HepG2 (cell line): ENCODE measurements at regions of chr14 and their contacts with region 1.

Region 1: GRCh38 chr14:22766456-22767322 is at the start of gene OXA1L:
- DNase-seq: peak; percentile 100
- ATAC-seq: peak; percentile 90
- H3K4me3 ChIP-seq: peak within 1 kb of the TSS; percentile 72 to 96 (median 83)
- H3K27ac ChIP-seq: peak within 1 kb of the TSS; percentile 74
- H3K4me1 ChIP-seq: peaks cover 22% of the 10 kb centered on the region
- H3K27me3 ChIP-seq: no peaks in the 10 kb centered on the region; a peak in 1 of 5 replicates
- CTCF ChIP-seq: peak; percentile 37
- EP300 ChIP-seq: peak in 1 of 2 experiments; percentile 52; a peak in 1 of 4 replicates
- POLR2A ChIP-seq: peak; percentile 98
- RAD21 ChIP-seq: peak; percentile 13
- total RNA-seq, gene OXA1L: 216 and 230 TPM in 2 replicates

Region 2: DNA sequence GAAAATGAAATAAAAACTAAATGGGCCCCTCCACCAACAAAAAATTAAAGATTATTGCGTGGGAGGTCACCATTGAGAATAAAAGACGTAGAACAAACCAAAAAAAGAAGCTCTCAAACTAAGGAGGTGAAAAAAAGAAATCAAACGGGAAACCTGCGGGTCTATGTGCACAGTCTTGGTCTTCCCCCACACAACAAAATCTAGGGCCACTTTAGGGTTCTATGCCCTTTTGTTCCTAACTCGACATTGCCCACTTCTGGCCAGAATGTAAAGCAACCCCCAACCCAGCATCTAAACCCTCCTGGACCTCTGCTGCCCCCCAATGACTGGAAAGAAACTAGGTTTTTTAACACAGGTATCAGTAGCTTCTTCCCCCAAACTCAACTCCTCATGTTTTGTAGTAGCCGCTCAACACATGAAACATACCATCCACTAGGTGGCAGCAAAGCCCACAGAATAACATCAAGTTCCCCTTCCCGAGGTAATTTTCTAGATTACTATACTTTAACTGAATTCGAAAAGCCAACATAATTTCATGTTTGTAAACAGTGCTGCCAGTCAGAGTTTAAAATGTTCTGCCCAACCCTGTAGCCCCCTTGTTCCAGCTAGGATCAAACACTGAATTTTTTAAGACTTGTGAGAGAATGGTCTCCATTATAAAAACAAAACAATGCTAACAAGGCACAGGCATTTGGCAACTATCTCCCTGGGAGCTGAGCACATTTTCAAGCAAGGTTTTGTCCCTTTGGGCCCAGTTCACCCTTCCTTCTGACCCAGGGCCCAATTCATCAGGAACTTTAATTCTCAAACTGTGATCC is 196.3 kb before region 1 on chr14:
- CTCF ChIA-PET with region 1: no interaction called
- POLR2A ChIA-PET with region 1: interaction called, 11 read pairs
- in situ Hi-C with region 1: no loop called
- intact Hi-C with region 1: loop called (anchors 1 kb)
- DNase-seq: peak; percentile 98
- ATAC-seq: peak; percentile 86
- H3K4me3 ChIP-seq: no peak overlapping the region
- H3K27ac ChIP-seq: peak overlapping the region; percentile 12
- H3K4me1 ChIP-seq: peaks cover 29% of the 10 kb centered on the region
- H3K27me3 ChIP-seq: no peaks in the 10 kb centered on the region
- CTCF ChIP-seq: peak; percentile 97
- EP300 ChIP-seq: no peak; a peak in 1 of 4 replicates
- POLR2A ChIP-seq: no peak
- RAD21 ChIP-seq: peak; percentile 96

Region 3: GRCh38 chr14:22653012-22653621 is 113.6 kb before region 1 on chr14:
- CTCF ChIA-PET with region 1: no interaction called
- POLR2A ChIA-PET with region 1: interaction called, 10 read pairs
- in situ Hi-C with region 1: no loop called
- intact Hi-C with region 1: loop called (anchors 5 kb)
- DNase-seq: peak; percentile 86
- ATAC-seq: peak; percentile 98
- H3K4me3 ChIP-seq: no peak overlapping the region
- H3K27ac ChIP-seq: no peak overlapping the region
- H3K4me1 ChIP-seq: 0 out of 2 replicates have a peak, but pooled peaks cover 5% of the 10 kb centered on the region
- H3K27me3 ChIP-seq: peaks cover 3 to 36% of the 10 kb centered on the region in 2 experiments; a peak in 4 of 5 replicates
- CTCF ChIP-seq: peak; percentile 99
- EP300 ChIP-seq: no peak; a peak in 1 of 4 replicates
- POLR2A ChIP-seq: no peak
- RAD21 ChIP-seq: peak; percentile 94

Region 4: GRCh38 chr14:22781586-22781991 is 14.9 kb after region 1 on chr14:
- CTCF ChIA-PET with region 1: no interaction called
- POLR2A ChIA-PET with region 1: interaction called, 14 read pairs
- in situ Hi-C with region 1: no loop called
- intact Hi-C with region 1: no loop called
- DNase-seq: no peak
- ATAC-seq: no peak
- H3K4me3 ChIP-seq: no peak overlapping the region
- H3K27ac ChIP-seq: no peak overlapping the region
- H3K4me1 ChIP-seq: peaks cover 7% of the 10 kb centered on the region; the same call in 1 of the 2 replicates
- H3K27me3 ChIP-seq: no peaks in the 10 kb centered on the region
- CTCF ChIP-seq: no peak
- EP300 ChIP-seq: no peak
- POLR2A ChIP-seq: no peak
- RAD21 ChIP-seq: no peak

Region 5: GRCh38 chr14:22822571-22823098 is 55.9 kb after region 1 on chr14:
- CTCF ChIA-PET with region 1: no interaction called
- POLR2A ChIA-PET with region 1: interaction called, 29 read pairs
- in situ Hi-C with region 1: no loop called
- intact Hi-C with region 1: no loop called
- DNase-seq: peak; percentile 78
- ATAC-seq: peak; percentile 70
- H3K4me3 ChIP-seq: peak overlapping the region; percentile 12 to 53 (median 27); a peak in 5 of 6 replicates
- H3K27ac ChIP-seq: no peak overlapping the region
- H3K4me1 ChIP-seq: peaks cover 67% of the 10 kb centered on the region
- H3K27me3 ChIP-seq: 0 out of 5 replicates have a peak, but pooled peaks cover 0 to 3% of the 10 kb centered on the region in 2 experiments
- CTCF ChIP-seq: peak; percentile 93
- EP300 ChIP-seq: 0 out of 4 replicates have a peak, but pooled peaks of 1 of the 2 experiments have one; percentile 19
- POLR2A ChIP-seq: no peak
- RAD21 ChIP-seq: peak; percentile 97

Region 6: GRCh38 chr14:22852940-22853767 is 86.5 kb after region 1 on chr14:
- CTCF ChIA-PET with region 1: no interaction called
- POLR2A ChIA-PET with region 1: interaction called, 16 read pairs
- in situ Hi-C with region 1: loop called (anchors 10 kb)
- intact Hi-C with region 1: no loop called
- DNase-seq: peak; percentile 86
- ATAC-seq: peak; percentile 88
- H3K4me3 ChIP-seq: peak overlapping the region; percentile 43 to 80 (median 57)
- H3K27ac ChIP-seq: no peak overlapping the region
- H3K4me1 ChIP-seq: peaks cover 42% of the 10 kb centered on the region
- H3K27me3 ChIP-seq: peaks cover 7 to 30% of the 10 kb centered on the region in 2 experiments; a peak in 4 of 5 replicates
- CTCF ChIP-seq: peak; percentile 98
- EP300 ChIP-seq: no peak
- POLR2A ChIP-seq: no peak
- RAD21 ChIP-seq: peak; percentile 100

Region 7: GRCh38 chr14:22929104-22929847 is 162.6 kb after region 1 on chr14 and contains the start of gene PRMT5:
- CTCF ChIA-PET with region 1: no interaction called
- POLR2A ChIA-PET with region 1: interaction called, 23 read pairs
- in situ Hi-C with region 1: no loop called
- intact Hi-C with region 1: no loop called
- DNase-seq: peak; percentile 100
- ATAC-seq: peak; percentile 98
- H3K4me3 ChIP-seq: peak within 1 kb of the TSS; percentile 77 to 98 (median 92)
- H3K27ac ChIP-seq: peak within 1 kb of the TSS; percentile 78
- H3K4me1 ChIP-seq: peaks cover 27% of the 10 kb centered on the region
- H3K27me3 ChIP-seq: no peaks in the 10 kb centered on the region; a peak in 1 of 5 replicates
- CTCF ChIP-seq: peak; percentile 60
- EP300 ChIP-seq: peak; percentile 56 to 82; a peak in 3 of 4 replicates
- POLR2A ChIP-seq: peak; percentile 96 to 98
- RAD21 ChIP-seq: peak; percentile 74
- total RNA-seq, gene PRMT5: 210 and 289 TPM in 2 replicates

Region 8: GRCh38 chr14:22939684-22940083 is 173.0 kb after region 1 on chr14:
- CTCF ChIA-PET with region 1: no interaction called
- POLR2A ChIA-PET with region 1: no interaction called
- in situ Hi-C with region 1: no loop called
- intact Hi-C with region 1: no loop called
- DNase-seq: no peak
- ATAC-seq: no peak
- H3K4me3 ChIP-seq: no peak overlapping the region
- H3K27ac ChIP-seq: no peak overlapping the region
- H3K4me1 ChIP-seq: no peaks in the 10 kb centered on the region
- H3K27me3 ChIP-seq: no peaks in the 10 kb centered on the region
- CTCF ChIP-seq: no peak
- EP300 ChIP-seq: no peak
- POLR2A ChIP-seq: no peak
- RAD21 ChIP-seq: no peak

Region 9: GRCh38 chr14:24071144-24071697 is 1304.5 kb after region 1 on chr14 and contains the start of gene CPNE6:
- CTCF ChIA-PET with region 1: no interaction called
- POLR2A ChIA-PET with region 1: no interaction called
- in situ Hi-C with region 1: no loop called
- intact Hi-C with region 1: no loop called
- DNase-seq: no peak
- ATAC-seq: no peak
- H3K4me3 ChIP-seq: no peak within 1 kb of the TSS
- H3K27ac ChIP-seq: no peak within 1 kb of the TSS
- H3K4me1 ChIP-seq: peaks cover 55% of the 10 kb centered on the region
- H3K27me3 ChIP-seq: peaks cover 13 to 56% of the 10 kb centered on the region in 2 experiments; a peak in 4 of 5 replicates
- CTCF ChIP-seq: no peak
- EP300 ChIP-seq: no peak
- POLR2A ChIP-seq: no peak
- RAD21 ChIP-seq: no peak
- total RNA-seq, gene CPNE6: not detected in 2 replicates